HepG2 (cell line): ENCODE measurements at regions of chr22 and their contacts with region 1.

Region 1: GRCh38 chr22:46150034-46150654 is at the start of gene PPARA:
- DNase-seq: peak; percentile 46
- ATAC-seq: peak; percentile 45
- H3K4me3 ChIP-seq: peak within 1 kb of the TSS; percentile 89 to 96 (median 95)
- H3K27ac ChIP-seq: peak within 1 kb of the TSS; percentile 77
- H3K4me1 ChIP-seq: peaks cover 49% of the 10 kb centered on the region
- H3K27me3 ChIP-seq: no peaks in the 10 kb centered on the region
- CTCF ChIP-seq: no peak
- EP300 ChIP-seq: no peak
- POLR2A ChIP-seq: no peak
- RAD21 ChIP-seq: 0 out of 2 replicates have a peak, but pooled peaks have one; percentile 19
- total RNA-seq, gene PPARA: 24.7 and 32.0 TPM in 2 replicates

Region 2: DNA sequence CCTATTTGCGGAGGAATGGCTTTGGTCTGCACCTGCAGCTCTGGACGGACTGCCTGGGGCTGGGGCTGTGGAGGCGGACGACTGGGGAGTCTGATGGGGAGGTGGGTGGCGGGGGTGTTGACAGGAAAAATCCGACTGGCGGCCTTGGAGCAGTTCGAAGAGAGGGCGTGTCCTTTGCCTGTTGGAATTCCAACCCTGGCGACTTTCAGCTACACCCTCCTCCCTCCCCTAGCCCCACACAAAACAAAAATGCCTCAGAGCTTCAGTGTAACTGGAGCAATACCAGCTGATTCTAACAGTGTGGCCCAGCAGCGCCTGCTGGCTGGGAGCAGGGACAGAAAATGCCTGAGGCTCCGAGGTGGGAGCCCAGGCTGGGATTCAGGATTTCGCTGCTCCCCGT is 393.1 kb before region 1 on chr22:
- CTCF ChIA-PET with region 1: no interaction called
- POLR2A ChIA-PET with region 1: no interaction called
- in situ Hi-C with region 1: no loop called
- intact Hi-C with region 1: no loop called
- DNase-seq: no peak
- ATAC-seq: no peak
- H3K4me3 ChIP-seq: no peak overlapping the region
- H3K27ac ChIP-seq: no peak overlapping the region
- H3K4me1 ChIP-seq: 0 out of 2 replicates have a peak, but pooled peaks cover under 1% of the 10 kb centered on the region
- H3K27me3 ChIP-seq: no peaks in the 10 kb centered on the region
- CTCF ChIP-seq: no peak
- EP300 ChIP-seq: no peak
- POLR2A ChIP-seq: no peak
- RAD21 ChIP-seq: no peak

Region 3: DNA sequence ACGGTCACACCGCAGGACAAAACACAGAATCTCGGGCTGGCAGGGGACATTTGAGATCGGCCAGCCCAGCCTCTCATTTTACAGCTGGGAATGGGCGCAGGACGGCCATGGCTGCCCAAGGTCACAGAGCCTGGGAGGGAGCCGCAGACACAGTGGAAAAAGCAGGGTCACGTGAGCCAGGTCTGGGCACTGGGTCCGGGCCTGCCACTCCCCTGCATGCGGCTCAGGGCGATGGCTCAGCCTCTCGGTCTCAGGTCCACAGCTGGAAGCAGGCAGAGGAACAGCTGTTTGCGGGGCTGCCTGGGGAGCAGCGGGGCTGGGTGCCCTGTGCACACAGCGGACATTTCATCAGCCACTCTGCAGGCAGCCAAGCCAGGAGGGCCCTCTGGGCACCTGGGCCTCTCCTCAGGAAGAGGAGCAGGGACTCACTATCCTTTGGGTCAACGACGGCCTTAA is 10.2 kb before region 1 on chr22:
- CTCF ChIA-PET with region 1: no interaction called
- POLR2A ChIA-PET with region 1: interaction called, 54 read pairs
- in situ Hi-C with region 1: no loop called
- intact Hi-C with region 1: no loop called
- DNase-seq: peak; percentile 58
- ATAC-seq: peak; percentile 62
- H3K4me3 ChIP-seq: peak overlapping the region in 2 of 3 experiments; percentile 35 to 57; a peak in 3 of 6 replicates
- H3K27ac ChIP-seq: no peak overlapping the region
- H3K4me1 ChIP-seq: peaks cover 74% of the 10 kb centered on the region
- H3K27me3 ChIP-seq: no peaks in the 10 kb centered on the region; a peak in 2 of 5 replicates
- CTCF ChIP-seq: no peak
- EP300 ChIP-seq: no peak
- POLR2A ChIP-seq: no peak
- RAD21 ChIP-seq: no peak